ENCODE measurements at regions of chr1 and their contacts with region 1.

Region 1: GRCh38 chr1:205750138-205751035 is at the start of gene NUCKS1:
- DNase-seq: peak; percentile 98
- ATAC-seq: peak; percentile 81
- H3K4me3 Mint-ChIP-seq: peak within 1 kb of the TSS; percentile 87
- H3K27ac Mint-ChIP-seq: peak within 1 kb of the TSS; percentile 96
- H3K4me1 Mint-ChIP-seq: peaks cover 32% of the 10 kb centered on the region
- H3K27me3 Mint-ChIP-seq: no peaks in the 10 kb centered on the region
- total RNA-seq, gene NUCKS1: 189 to 260 TPM

Region 2: DNA sequence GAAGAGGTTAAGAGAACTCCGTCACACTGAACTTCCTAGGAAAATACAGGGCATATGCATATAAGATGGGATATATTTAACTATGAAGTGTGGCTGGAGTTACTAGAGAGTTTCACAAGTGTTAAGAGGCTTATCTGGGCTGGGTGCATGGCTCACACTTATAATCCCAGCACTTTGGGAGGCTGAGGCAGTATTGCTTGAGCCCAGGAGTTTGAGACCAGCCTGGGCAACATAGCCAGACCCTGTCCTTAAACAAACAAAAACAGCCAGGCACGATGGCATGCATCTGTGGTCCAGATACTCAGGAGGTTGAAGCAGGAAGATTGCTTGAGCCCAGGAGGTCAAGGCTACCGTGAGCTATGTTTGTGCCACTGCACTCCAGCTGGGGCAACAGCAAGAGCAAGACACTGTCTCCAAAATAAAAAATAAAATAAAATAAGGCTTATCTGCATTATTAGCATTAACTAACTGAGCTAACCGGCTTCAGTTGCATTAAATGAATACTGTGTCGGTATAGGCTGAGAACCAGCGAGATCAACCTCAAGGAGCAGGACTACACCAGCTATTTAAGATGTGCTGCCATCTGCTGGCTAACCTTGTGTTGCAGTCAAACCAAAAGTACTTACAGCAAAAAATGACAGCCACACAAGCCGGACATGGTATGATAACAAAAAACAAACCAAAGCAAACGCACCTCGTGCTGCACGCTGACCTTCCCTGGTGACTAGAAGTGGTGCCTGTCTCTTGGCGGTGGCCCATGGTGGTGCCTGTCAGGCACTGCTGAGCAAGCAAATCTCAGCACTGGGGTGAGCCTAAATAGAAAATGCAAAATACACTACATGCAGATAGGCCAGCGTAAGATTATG is 608.9 kb before region 1 on chr1:
- CTCF ChIA-PET with region 1: no interaction called
- POLR2A ChIA-PET with region 1: interaction called, 12 read pairs
- intact Hi-C with region 1: no loop called
- DNase-seq: peak; percentile 88
- ATAC-seq: peak; percentile 96
- H3K4me3 Mint-ChIP-seq: no peak overlapping the region
- H3K27ac Mint-ChIP-seq: no peak overlapping the region
- H3K4me1 Mint-ChIP-seq: peaks cover 3% of the 10 kb centered on the region
- H3K27me3 Mint-ChIP-seq: no peaks in the 10 kb centered on the region

Region 3: DNA sequence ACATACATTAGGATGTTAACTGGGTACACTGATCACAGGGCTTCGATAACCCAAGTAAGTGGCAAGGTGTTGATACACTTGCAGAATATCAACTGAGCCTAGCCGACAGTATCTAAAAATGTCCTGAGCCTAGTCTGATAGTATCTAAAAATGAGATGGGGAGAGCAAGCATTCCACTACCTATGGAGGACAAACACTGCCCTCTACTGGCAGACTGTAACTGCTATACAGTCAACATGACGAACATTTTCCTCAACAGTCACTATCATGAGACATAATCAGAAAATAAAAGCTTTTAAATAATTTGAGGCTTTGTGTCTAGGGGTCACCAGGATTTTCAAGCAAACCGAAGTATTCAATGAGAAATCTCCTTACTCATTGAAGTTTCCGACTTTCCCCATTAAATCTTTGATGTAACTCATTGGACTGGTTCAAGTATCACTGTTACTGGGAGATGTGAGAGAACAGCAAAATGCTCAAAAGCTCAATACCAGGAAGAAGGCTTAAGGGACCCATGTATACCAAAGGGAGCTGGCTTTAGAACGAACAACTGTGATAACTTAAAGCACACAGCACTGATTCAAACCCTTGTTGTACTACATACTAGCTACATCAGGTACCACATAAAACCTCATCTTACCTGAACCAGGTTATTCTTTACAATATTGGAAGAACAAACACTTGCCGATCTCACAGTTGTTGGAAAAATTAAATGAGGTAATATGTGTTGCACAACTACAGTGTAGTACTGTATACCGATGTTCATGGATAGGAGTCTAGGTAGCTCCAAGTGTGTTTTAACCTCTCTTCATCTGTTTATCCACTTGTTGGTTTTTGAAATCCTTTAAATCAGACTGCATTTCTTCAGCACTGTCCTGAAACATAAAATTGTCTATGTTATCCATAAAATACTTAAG is 39.0 kb before region 1 on chr1:
- CTCF ChIA-PET with region 1: interaction called, 18 read pairs
- POLR2A ChIA-PET with region 1: interaction called, 4 read pairs
- intact Hi-C with region 1: loop called (anchors 2 kb)
- DNase-seq: peak; percentile 78
- ATAC-seq: peak; percentile 90
- H3K4me3 Mint-ChIP-seq: no peak overlapping the region
- H3K27ac Mint-ChIP-seq: peak overlapping the region; percentile 43
- H3K4me1 Mint-ChIP-seq: peaks cover 13% of the 10 kb centered on the region
- H3K27me3 Mint-ChIP-seq: no peaks in the 10 kb centered on the region

Region 4: GRCh38 chr1:205735218-205735617 is 15.2 kb before region 1 on chr1:
- CTCF ChIA-PET with region 1: interaction called, 6 read pairs
- POLR2A ChIA-PET with region 1: no interaction called
- intact Hi-C with region 1: loop called in 1 of 2 experiments (anchors 1 kb)
- DNase-seq: no peak
- ATAC-seq: no peak
- H3K4me3 Mint-ChIP-seq: no peak overlapping the region
- H3K27ac Mint-ChIP-seq: peak overlapping the region; percentile 17
- H3K4me1 Mint-ChIP-seq: peaks cover 47% of the 10 kb centered on the region
- H3K27me3 Mint-ChIP-seq: no peaks in the 10 kb centered on the region

Region 5: DNA sequence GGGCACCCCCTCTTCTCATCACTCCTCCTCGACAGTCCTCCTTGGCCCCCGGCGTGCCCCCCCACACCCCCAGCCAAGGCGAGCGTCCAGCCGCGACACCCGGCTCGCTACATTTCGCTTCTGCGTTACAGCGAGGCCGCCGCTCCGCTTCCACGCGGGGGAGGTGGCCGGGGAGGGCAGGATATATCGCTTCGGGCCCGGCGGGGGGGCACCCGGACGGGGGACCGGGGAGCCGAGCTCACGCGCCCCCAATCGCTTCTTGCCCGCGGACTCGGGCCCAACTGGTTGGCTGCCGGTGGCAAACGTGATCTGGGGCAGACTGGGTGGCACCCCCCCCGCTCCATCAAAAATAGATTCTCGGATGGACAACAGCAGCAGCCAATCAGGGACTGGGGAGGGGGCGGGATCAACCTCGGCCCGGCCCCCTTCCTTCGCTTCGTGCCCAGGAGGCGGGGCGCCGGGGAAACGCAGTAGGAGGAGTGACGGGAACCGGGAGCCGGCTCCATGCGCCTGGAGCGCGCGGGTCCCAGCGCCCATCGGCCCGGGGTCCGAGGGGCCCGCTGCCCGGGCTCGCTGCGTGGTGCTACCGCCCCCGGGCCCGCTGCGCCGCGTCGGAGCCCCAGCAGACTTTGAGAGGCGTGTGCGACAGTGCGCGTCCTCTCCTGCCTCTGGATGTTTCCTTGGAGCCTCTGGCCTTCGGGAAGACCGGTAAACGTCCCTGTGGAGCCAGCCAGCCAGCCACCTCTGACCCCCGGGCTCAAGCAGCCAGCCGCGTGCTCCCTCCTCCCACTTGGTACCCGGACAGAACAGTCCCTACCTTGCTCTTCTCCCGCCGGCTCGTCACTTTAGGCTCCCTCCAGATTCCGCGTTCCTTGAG is 62.7 kb after region 1 on chr1 and contains the start of gene SLC41A1:
- CTCF ChIA-PET with region 1: no interaction called
- POLR2A ChIA-PET with region 1: interaction called, 7 read pairs
- intact Hi-C with region 1: loop called (anchors 1 kb)
- DNase-seq: peak; percentile 94
- ATAC-seq: peak; percentile 96
- H3K4me3 Mint-ChIP-seq: peak within 1 kb of the TSS; percentile 81
- H3K27ac Mint-ChIP-seq: peak within 1 kb of the TSS; percentile 84
- H3K4me1 Mint-ChIP-seq: peaks cover 47% of the 10 kb centered on the region
- H3K27me3 Mint-ChIP-seq: no peaks in the 10 kb centered on the region
- total RNA-seq, gene SLC41A1: 34.4 to 41.5 TPM

Region 6: GRCh38 chr1:206021626-206022365 is 271.4 kb after region 1 on chr1:
- CTCF ChIA-PET with region 1: no interaction called
- POLR2A ChIA-PET with region 1: no interaction called
- intact Hi-C with region 1: no loop called
- DNase-seq: no peak
- ATAC-seq: no peak
- H3K4me3 Mint-ChIP-seq: no peak overlapping the region
- H3K27ac Mint-ChIP-seq: no peak overlapping the region
- H3K4me1 Mint-ChIP-seq: no peaks in the 10 kb centered on the region
- H3K27me3 Mint-ChIP-seq: peaks cover 2% of the 10 kb centered on the region